Transverse colon (tissue), 4 donors: ENCODE measurements at regions of chr1 and their contacts with region 1.

Region 1: GRCh38 chr1:177451191-177451590 is 280.4 kb downstream of the BRINP2 start:
- DNase-seq: peak; percentile 32
- H3K4me3 ChIP-seq: no peak overlapping the region
- H3K27ac ChIP-seq: no peak overlapping the region
- H3K4me1 ChIP-seq: peaks cover 0 to 9% (median 0%) of the 10 kb centered on the region in 4 donors
- H3K27me3 ChIP-seq: no peaks in the 10 kb centered on the region
- CTCF ChIP-seq: peak in 1 of 5 experiments; percentile 12
- EP300 ChIP-seq: no peak
- POLR2A ChIP-seq: no peak

Region 2: DNA sequence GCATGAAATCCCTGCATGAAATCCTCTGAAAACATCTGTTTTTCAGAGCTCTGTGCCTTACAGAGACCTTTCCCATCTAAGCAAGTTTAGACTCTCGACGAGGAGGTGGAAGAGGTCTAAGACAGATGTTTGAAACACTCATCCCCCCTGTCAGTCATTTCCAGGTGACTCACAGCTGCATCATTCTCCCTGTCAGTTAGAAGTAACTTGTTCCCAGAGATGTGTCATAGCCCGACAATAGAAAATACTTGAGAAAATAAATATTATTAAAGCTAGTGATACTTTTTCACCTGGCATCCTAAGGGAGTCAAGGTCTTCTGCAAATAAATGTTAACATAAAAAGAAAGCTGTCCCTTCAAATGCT is 560.3 kb after region 1 on chr1:
- in situ Hi-C with region 1: no loop called
- intact Hi-C with region 1: loop called (anchors 5 kb)
- DNase-seq: no peak
- H3K4me3 ChIP-seq: no peak overlapping the region
- H3K27ac ChIP-seq: no peak overlapping the region
- H3K4me1 ChIP-seq: no peaks in the 10 kb centered on the region
- H3K27me3 ChIP-seq: no peaks in the 10 kb centered on the region
- CTCF ChIP-seq: no peak
- EP300 ChIP-seq: no peak
- POLR2A ChIP-seq: no peak